ENCODE measurements at regions of chr4 and their contacts with region 1.

Region 1: GRCh38 chr4:114659386-114660008 is 60.9 kb downstream of the UGT8 start:
- DNase-seq: no peak
- H3K4me3 ChIP-seq: no peak overlapping the region
- H3K27ac ChIP-seq: no peak overlapping the region
- H3K4me1 ChIP-seq: no peaks in the 10 kb centered on the region
- H3K27me3 ChIP-seq: no peaks in the 10 kb centered on the region
- CTCF ChIP-seq: peak in 2 of 3 experiments; percentile 56 to 61

Region 2: DNA sequence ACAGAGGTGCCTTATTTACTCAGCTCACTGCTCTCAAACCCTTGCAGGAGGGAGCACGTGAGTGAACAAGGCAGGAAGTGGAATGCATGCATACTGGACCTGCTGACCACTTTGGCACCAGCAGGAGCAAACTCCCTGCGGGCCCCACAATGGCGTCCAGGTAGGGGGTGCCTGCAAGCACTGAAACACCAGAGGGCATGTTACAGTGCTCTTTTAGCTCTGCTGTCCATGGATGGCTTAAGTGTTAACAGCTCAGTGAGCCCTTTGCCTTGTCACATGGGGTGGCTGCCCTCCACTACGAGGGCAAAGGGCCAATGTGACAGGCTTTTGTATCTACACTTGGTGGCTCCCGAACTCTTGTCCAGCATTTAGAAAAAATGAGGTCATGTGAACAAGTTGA is 260.4 kb before region 1 on chr4:
- intact Hi-C with region 1: loop called (anchors 10 kb)
- DNase-seq: no peak
- H3K4me3 ChIP-seq: no peak overlapping the region
- H3K27ac ChIP-seq: no peak overlapping the region
- H3K4me1 ChIP-seq: no peaks in the 10 kb centered on the region
- H3K27me3 ChIP-seq: no peaks in the 10 kb centered on the region
- CTCF ChIP-seq: no peak